ENCODE measurements at regions of chr1 and their contacts with region 1.

Region 1: GRCh38 chr1:24570354-24571126 is 14.7 kb downstream of the NCMAP start:
- DNase-seq: no peak
- H3K4me3 Mint-ChIP-seq: no peak overlapping the region
- H3K27ac Mint-ChIP-seq: no peak overlapping the region
- H3K4me1 Mint-ChIP-seq: peaks cover 29% of the 10 kb centered on the region
- H3K27me3 Mint-ChIP-seq: no peaks in the 10 kb centered on the region
- CTCF ChIP-seq: no peak

Region 2: DNA sequence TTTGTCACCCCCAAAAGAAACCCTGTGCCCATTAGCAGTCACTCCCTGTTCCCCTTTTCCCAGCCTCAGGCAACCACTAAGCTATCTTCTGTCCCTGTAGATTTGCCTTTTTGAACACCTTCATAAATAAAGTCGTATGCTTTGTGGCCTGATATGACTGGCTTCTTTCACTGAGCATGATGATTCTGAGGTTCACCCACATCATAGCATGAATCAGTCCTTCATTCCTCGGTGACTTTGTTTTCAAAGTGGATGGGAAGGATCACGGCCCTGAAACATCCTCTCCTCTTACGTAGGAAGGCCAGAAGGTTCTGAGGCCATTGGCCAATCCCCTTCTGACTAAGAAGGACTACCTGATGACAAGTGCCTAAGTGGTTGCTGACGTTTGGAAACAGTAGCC is 115.9 kb before region 1 on chr1:
- CTCF ChIA-PET with region 1: no interaction called
- intact Hi-C with region 1: no loop called
- DNase-seq: no peak
- H3K4me3 Mint-ChIP-seq: no peak overlapping the region
- H3K27ac Mint-ChIP-seq: no peak overlapping the region
- H3K4me1 Mint-ChIP-seq: no peaks in the 10 kb centered on the region
- H3K27me3 Mint-ChIP-seq: no peaks in the 10 kb centered on the region
- CTCF ChIP-seq: no peak

Region 3: GRCh38 chr1:24586970-24587820 is 16.7 kb after region 1 on chr1:
- CTCF ChIA-PET with region 1: interaction called, 11 read pairs
- intact Hi-C with region 1: no loop called
- DNase-seq: peak; percentile 46
- H3K4me3 Mint-ChIP-seq: no peak overlapping the region
- H3K27ac Mint-ChIP-seq: no peak overlapping the region
- H3K4me1 Mint-ChIP-seq: peaks cover 19% of the 10 kb centered on the region
- H3K27me3 Mint-ChIP-seq: no peaks in the 10 kb centered on the region
- CTCF ChIP-seq: peak; percentile 48